Dendritic cell treated with granulocyte-macrophage colony-stimulating factor and Interleukin-4, amounts not matched to agents 40 ng/mL and 50 ng/mL, for 4 days (primary cell): ENCODE measurements at regions of chr13 and their contacts with region 1.

Region 1: DNA sequence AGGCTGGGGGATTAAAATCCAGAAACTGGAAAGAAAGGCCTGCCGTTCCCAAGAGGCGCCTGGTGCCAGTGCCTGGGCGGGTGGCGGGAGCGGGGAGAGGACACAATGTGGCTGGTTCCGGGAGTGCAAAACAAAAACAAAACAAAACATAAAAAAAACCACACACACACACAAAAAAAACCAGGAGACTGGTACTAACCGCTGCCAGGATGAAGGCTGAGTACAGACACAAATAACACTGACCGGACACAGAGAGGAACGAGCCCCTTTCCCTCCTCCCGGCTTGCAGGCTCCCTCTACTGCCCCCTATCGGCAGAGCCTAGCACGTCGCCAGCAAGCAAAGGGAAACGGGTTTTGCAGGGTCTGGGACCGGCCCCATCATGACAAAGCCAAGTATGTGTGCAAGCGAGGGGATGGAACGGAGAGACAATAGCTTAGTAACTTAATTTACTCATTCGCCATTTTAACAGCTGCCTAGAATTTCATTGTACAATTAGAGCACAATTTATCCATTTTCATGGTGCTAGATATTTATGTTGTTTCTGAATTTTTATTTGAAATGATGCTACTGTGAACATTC is 17.9 kb upstream of the ZDHHC20 start:
- H3K4me3 Mint-ChIP-seq: peak overlapping the region; percentile 87
- H3K27ac Mint-ChIP-seq: peak overlapping the region; percentile 89
- H3K4me1 Mint-ChIP-seq: peaks cover 17% of the 10 kb centered on the region
- H3K27me3 Mint-ChIP-seq: peaks cover 6% of the 10 kb centered on the region

Region 2: DNA sequence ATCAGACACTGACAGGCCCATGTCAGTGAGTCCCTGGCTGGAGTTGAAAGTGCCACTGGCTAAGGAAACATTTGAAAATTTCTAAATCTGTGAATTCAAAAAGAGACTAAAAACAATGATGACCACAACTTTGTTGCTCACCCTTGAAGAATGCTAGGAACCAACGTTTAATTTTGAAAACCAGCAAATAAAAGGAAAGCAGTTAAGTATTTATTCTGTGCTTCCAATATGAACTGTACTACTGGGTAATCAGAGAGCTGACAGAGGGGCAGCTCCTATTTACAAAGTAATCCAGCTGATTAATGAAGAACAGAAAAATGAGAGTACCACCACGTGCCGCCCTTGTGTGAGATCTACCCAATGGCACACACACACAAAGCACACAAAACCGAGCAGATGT is 370.9 kb before region 1 on chr13:
- intact Hi-C with region 1: loop called (anchors 1 kb)
- H3K4me3 Mint-ChIP-seq: no peak overlapping the region
- H3K27ac Mint-ChIP-seq: no peak overlapping the region
- H3K4me1 Mint-ChIP-seq: no peaks in the 10 kb centered on the region
- H3K27me3 Mint-ChIP-seq: no peaks in the 10 kb centered on the region

Region 3: GRCh38 chr13:21176220-21176982 is 300.6 kb before region 1 on chr13 and contains the starts of genes MRPL57 and SKA3:
- intact Hi-C with region 1: loop called (anchors 5 kb)
- H3K4me3 Mint-ChIP-seq: peak within 1 kb of the TSS; percentile 98
- H3K27ac Mint-ChIP-seq: peak within 1 kb of the TSS; percentile 96
- H3K4me1 Mint-ChIP-seq: peaks cover 11% of the 10 kb centered on the region
- H3K27me3 Mint-ChIP-seq: no peaks in the 10 kb centered on the region

Region 4: GRCh38 chr13:21297914-21298831 is 178.8 kb before region 1 on chr13:
- intact Hi-C with region 1: loop called (anchors 1 kb)
- H3K4me3 Mint-ChIP-seq: peak overlapping the region; percentile 93
- H3K27ac Mint-ChIP-seq: peak overlapping the region; percentile 83
- H3K4me1 Mint-ChIP-seq: peaks cover 23% of the 10 kb centered on the region
- H3K27me3 Mint-ChIP-seq: no peaks in the 10 kb centered on the region

Region 5: DNA sequence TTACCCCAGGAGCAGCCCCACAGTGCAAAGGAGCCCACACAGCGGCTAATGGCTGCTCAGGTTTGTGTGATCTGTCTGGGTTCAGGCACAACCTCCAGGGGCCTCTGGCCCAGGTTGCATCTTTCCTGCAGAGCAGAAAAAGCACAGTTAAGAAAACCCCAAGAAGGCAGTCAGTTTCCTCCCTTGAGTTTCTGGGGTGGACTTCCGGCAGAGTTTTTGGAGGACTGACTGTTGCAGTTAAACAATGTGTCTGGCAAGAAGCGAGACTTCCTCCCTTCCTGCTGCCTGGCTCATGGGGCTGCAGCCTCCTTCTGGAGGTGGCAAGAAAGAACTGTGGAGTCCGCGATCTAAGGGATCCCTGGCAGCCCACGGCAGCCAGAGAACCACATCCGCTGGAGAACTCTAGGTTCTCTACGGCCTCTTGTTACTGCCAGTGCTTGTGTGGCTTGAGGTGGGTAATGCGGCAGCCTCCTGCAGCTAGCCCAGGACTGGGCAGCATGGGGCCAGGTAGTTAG is 132.3 kb before region 1 on chr13:
- intact Hi-C with region 1: no loop called
- H3K4me3 Mint-ChIP-seq: no peak overlapping the region
- H3K27ac Mint-ChIP-seq: no peak overlapping the region
- H3K4me1 Mint-ChIP-seq: peaks cover 13% of the 10 kb centered on the region
- H3K27me3 Mint-ChIP-seq: no peaks in the 10 kb centered on the region